ENCODE measurements at regions of chr6 and their contacts with region 1.

Region 1: GRCh38 chr6:105363100-105363754 is 39.7 kb downstream of the PREP start:
- DNase-seq: peak; percentile 47
- ATAC-seq: peak; percentile 40
- H3K4me3 ChIP-seq: no peak overlapping the region
- H3K27ac ChIP-seq: no peak overlapping the region
- H3K4me1 ChIP-seq: peaks cover 6% of the 10 kb centered on the region
- H3K27me3 ChIP-seq: no peaks in the 10 kb centered on the region
- CTCF ChIP-seq: peak; percentile 66
- POLR2A ChIP-seq: no peak
- RAD21 ChIP-seq: peak; percentile 72

Region 2: GRCh38 chr6:104928141-104928540 is 435.1 kb before region 1 on chr6:
- CTCF ChIA-PET with region 1: no interaction called
- POLR2A ChIA-PET with region 1: no interaction called
- dilution Hi-C with region 1: no loop called
- in situ Hi-C with region 1: no loop called
- intact Hi-C with region 1: no loop called
- DNase-seq: no peak
- ATAC-seq: no peak
- H3K4me3 ChIP-seq: no peak overlapping the region
- H3K27ac ChIP-seq: no peak overlapping the region
- H3K4me1 ChIP-seq: no peaks in the 10 kb centered on the region
- H3K27me3 ChIP-seq: no peaks in the 10 kb centered on the region; the same call in 1 of the 2 replicates
- CTCF ChIP-seq: no peak
- POLR2A ChIP-seq: no peak
- RAD21 ChIP-seq: no peak

Region 3: DNA sequence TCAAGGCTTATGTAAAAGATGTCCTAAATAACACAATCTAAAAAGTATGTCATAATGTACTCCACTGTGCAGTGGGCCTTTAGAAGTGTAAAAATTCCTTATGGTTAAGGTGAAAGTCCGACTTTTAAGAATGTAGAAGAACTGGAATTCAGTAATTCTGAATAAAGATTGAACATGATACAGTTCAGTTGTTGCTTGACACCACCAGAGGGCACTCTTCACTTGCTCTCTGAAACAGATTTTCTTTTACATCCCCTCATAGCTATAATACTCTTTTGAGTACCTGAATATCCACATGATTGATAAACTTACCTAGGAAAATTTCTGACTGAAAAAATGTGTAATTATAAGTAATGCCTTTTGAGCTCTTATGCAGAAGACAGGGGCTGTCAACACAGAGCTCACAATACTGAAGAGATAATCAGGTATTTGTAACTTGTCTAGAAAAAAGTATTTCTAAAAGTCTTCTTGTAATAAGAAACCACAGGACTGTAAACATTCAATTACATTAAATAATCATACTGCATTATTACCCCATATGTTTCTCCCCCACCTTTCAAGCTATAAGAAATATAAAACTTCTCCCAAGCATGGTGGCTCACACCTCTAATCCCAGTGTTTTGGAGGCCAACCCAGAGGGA is 275.5 kb before region 1 on chr6:
- CTCF ChIA-PET with region 1: interaction called, 19 read pairs
- POLR2A ChIA-PET with region 1: no interaction called
- dilution Hi-C with region 1: no loop called
- in situ Hi-C with region 1: loop called (anchors 5 kb)
- intact Hi-C with region 1: loop called (anchors 1 kb)
- DNase-seq: peak; percentile 69
- ATAC-seq: peak; percentile 90
- H3K4me3 ChIP-seq: no peak overlapping the region
- H3K27ac ChIP-seq: no peak overlapping the region
- H3K4me1 ChIP-seq: no peaks in the 10 kb centered on the region
- H3K27me3 ChIP-seq: peaks cover 5% of the 10 kb centered on the region
- CTCF ChIP-seq: peak; percentile 91
- POLR2A ChIP-seq: no peak
- RAD21 ChIP-seq: peak; percentile 94

Region 4: GRCh38 chr6:105136431-105137350 is 226.5 kb before region 1 on chr6:
- CTCF ChIA-PET with region 1: no interaction called
- POLR2A ChIA-PET with region 1: no interaction called
- dilution Hi-C with region 1: no loop called
- in situ Hi-C with region 1: no loop called
- intact Hi-C with region 1: loop called (anchors 1 kb)
- DNase-seq: peak; percentile 59
- ATAC-seq: peak; percentile 80
- H3K4me3 ChIP-seq: peak overlapping the region; percentile 86
- H3K27ac ChIP-seq: peak overlapping the region; percentile 42
- H3K4me1 ChIP-seq: no peaks in the 10 kb centered on the region
- H3K27me3 ChIP-seq: no peaks in the 10 kb centered on the region
- CTCF ChIP-seq: peak; percentile 29; the same call in 1 of the 2 replicates
- POLR2A ChIP-seq: no peak
- RAD21 ChIP-seq: no peak; the same call in none of the 2 replicates

Region 5: DNA sequence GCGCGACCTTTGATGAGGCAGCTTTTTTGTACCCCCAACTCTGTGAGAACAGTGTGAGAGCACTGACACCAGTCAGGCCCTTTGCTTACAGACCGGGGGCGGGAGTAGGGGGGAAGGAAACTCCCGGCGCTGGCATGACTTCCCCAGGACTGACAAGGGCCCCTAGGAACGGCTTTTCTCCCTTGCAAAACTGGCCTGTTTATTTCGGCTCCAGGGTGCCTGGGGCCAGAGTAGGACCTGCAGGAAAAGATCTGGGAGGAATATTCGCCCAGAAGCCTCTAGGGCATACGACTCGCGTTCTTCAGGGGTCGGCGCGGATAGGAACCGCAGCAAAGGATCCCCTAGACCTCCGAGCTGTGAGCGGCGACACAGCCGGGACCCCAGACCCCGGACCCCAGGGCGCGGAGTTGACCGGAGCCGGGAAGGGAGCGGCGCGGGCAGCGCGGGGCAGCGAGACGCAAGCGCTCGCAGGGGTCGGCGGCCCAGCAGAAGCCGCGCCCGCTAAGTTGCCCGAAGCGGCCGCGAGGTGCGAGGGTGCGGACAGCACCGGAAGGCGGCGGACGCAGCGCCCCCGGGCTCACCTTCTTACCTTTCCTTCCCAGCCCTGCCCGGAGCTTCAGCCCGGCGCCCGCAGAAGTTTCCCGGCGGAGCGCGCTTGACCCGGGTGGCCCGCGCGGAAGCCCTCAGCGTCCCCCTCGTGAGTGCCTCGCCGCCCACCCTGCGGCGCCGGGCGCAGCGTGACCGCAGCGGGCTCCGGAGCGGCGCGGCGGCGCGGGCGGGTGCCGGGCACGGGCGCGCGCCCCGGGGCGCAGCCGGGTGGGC is 183.8 kb before region 1 on chr6 and contains the start of gene POPDC3:
- CTCF ChIA-PET with region 1: interaction called, 3 read pairs
- POLR2A ChIA-PET with region 1: no interaction called
- dilution Hi-C with region 1: no loop called
- in situ Hi-C with region 1: no loop called
- intact Hi-C with region 1: loop called (anchors 5 kb)
- DNase-seq: peak; percentile 53
- ATAC-seq: peak; percentile 71
- H3K4me3 ChIP-seq: peak within 1 kb of the TSS; percentile 63
- H3K27ac ChIP-seq: peak within 1 kb of the TSS; percentile 80
- H3K4me1 ChIP-seq: peaks cover 2% of the 10 kb centered on the region; the same call in 1 of the 2 replicates
- H3K27me3 ChIP-seq: no peaks in the 10 kb centered on the region
- CTCF ChIP-seq: no peak
- POLR2A ChIP-seq: peak; percentile 13; the same call in 1 of the 2 replicates
- RAD21 ChIP-seq: no peak
- total RNA-seq, gene POPDC3: 25.8 and 29.4 TPM in 2 replicates